ENCODE measurements at regions of chr3 and their contacts with region 1.

Region 1: DNA sequence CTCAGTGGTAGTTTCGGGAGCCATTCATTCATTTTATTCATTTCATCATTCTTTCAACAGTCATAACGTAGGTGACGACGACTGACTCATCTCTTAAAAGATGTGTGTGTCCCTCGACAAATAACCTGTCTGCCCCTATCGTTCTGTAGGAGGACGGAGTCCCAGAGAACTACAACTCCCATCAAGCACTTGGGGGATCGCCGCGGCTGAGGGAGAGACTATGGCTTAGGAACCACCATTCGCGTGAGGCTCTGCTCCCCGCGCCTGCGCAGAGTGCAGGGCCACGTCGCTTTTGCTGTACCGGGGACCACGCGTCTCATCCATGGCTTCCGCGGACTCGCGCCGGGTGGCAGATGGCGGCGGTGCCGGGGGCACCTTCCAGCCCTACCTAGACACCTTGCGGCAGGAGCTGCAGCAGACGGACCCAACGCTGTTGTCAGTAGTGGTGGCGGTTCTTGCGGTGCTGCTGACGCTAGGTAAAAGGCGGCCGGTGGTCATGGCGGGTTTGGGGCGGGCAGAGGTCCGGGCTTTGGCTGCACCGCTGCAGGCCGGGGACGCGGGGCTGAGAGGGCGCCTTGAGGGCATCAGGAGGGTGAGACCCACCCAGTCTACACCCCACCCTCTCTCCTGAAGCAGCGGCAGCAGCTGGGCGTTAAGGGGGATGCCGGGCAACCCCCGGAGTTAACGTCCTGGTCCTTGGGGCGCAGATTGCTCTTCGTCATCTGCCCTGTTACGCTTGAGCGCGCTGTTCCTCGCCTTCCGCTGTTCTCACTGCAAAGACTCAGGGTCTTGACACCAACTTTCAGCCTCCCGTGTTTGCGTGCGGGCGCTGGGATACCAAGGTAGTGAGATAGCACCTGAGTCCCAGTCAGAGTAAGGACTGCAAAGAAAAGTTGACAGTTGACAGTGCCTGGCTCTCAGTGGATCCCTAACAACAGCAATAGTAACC is at the start of gene SRPRB:
- DNase-seq: peak; percentile 98
- H3K4me3 Mint-ChIP-seq: peak within 1 kb of the TSS; percentile 99
- H3K27ac Mint-ChIP-seq: peak within 1 kb of the TSS; percentile 98
- H3K4me1 Mint-ChIP-seq: peaks cover 17% of the 10 kb centered on the region
- H3K27me3 Mint-ChIP-seq: peaks cover 16% of the 10 kb centered on the region
- total RNA-seq, gene SRPRB: 97.7 and 103 TPM in 2 replicates

Region 2: GRCh38 chr3:132416807-132417694 is 1388.8 kb before region 1 on chr3 and contains the start of gene DNAJC13:
- intact Hi-C with region 1: loop called (anchors 5 kb)
- DNase-seq: peak; percentile 97
- H3K4me3 Mint-ChIP-seq: peak within 1 kb of the TSS; percentile 98
- H3K27ac Mint-ChIP-seq: peak within 1 kb of the TSS; percentile 95
- H3K4me1 Mint-ChIP-seq: peaks cover 25% of the 10 kb centered on the region
- H3K27me3 Mint-ChIP-seq: peaks cover 3% of the 10 kb centered on the region
- total RNA-seq, gene DNAJC13: 33.6 and 34.0 TPM in 2 replicates

Region 3: GRCh38 chr3:133475245-133476010 is 330.4 kb before region 1 on chr3:
- intact Hi-C with region 1: loop called (anchors 10 kb)
- DNase-seq: peak; percentile 80
- H3K4me3 Mint-ChIP-seq: peak overlapping the region; percentile 6
- H3K27ac Mint-ChIP-seq: peak overlapping the region; percentile 70
- H3K4me1 Mint-ChIP-seq: peaks cover 46% of the 10 kb centered on the region
- H3K27me3 Mint-ChIP-seq: no peaks in the 10 kb centered on the region

Region 4: GRCh38 chr3:133661454-133662277 is 144.1 kb before region 1 on chr3 and contains the start of gene TOPBP1:
- intact Hi-C with region 1: loop called (anchors 1 kb)
- DNase-seq: peak; percentile 98
- H3K4me3 Mint-ChIP-seq: peak within 1 kb of the TSS; percentile 86
- H3K27ac Mint-ChIP-seq: peak within 1 kb of the TSS; percentile 94
- H3K4me1 Mint-ChIP-seq: peaks cover 26% of the 10 kb centered on the region
- H3K27me3 Mint-ChIP-seq: no peaks in the 10 kb centered on the region
- total RNA-seq, gene TOPBP1: 92.6 and 97.9 TPM in 2 replicates

Region 5: GRCh38 chr3:134485718-134486576 is 680.1 kb after region 1 on chr3 and contains the starts of genes ANAPC13 and CEP63:
- intact Hi-C with region 1: loop called (anchors 1 kb)
- DNase-seq: peak; percentile 97
- H3K4me3 Mint-ChIP-seq: peak within 1 kb of the TSS; percentile 85
- H3K27ac Mint-ChIP-seq: peak within 1 kb of the TSS; percentile 98
- H3K4me1 Mint-ChIP-seq: peaks cover 38% of the 10 kb centered on the region
- H3K27me3 Mint-ChIP-seq: no peaks in the 10 kb centered on the region
- total RNA-seq, gene ANAPC13: 29.7 and 30.0 TPM in 2 replicates
- total RNA-seq, gene CEP63: 18.6 and 20.5 TPM in 2 replicates

Measured in activated CD4-positive, alpha-beta T cell treated with anti-CD3 and anti-CD28 coated beads, Interleukin-2, amount 10 ng/mL, durations not matched to agents 24 days and 14 days (primary cell).